ENCODE measurements at regions of chr2 and their contacts with region 1.

Region 1: GRCh38 chr2:10654069-10654468 is 35.7 kb downstream of the NOL10 start:
- DNase-seq: peak; percentile 85
- H3K4me3 Mint-ChIP-seq: no peak overlapping the region
- H3K27ac Mint-ChIP-seq: peak overlapping the region; percentile 80
- H3K4me1 Mint-ChIP-seq: peaks cover 44% of the 10 kb centered on the region
- H3K27me3 Mint-ChIP-seq: no peaks in the 10 kb centered on the region

Region 2: DNA sequence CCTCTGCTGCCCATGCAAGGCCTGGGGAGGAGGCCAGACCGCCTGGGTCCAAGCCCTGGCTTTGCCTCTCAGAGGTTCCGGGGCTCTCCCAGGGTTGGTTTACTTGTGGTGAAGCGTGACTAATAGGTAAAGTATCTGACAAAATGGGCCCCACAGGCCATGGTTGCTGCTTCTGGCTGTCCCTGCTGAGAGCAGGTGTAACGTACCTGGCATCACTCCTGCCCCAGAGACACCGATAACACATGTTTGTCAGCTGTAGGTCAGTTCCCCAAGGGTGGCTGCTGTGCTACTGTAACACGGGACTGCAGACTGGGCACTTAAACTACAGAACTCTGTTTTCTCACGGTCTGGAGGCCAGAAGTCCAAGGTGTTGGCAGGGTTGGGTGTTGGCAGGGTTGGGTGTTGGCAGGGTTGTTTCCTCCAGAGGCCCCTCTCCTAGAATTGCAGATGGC is 240.0 kb before region 1 on chr2:
- CTCF ChIA-PET with region 1: no interaction called
- POLR2A ChIA-PET with region 1: no interaction called
- intact Hi-C with region 1: no loop called
- DNase-seq: peak; percentile 25
- H3K4me3 Mint-ChIP-seq: no peak overlapping the region
- H3K27ac Mint-ChIP-seq: no peak overlapping the region
- H3K4me1 Mint-ChIP-seq: peaks cover 11% of the 10 kb centered on the region
- H3K27me3 Mint-ChIP-seq: no peaks in the 10 kb centered on the region

Region 3: GRCh38 chr2:10477443-10478297 is 176.4 kb before region 1 on chr2:
- CTCF ChIA-PET with region 1: no interaction called
- POLR2A ChIA-PET with region 1: no interaction called
- intact Hi-C with region 1: no loop called
- DNase-seq: no peak
- H3K4me3 Mint-ChIP-seq: no peak overlapping the region
- H3K27ac Mint-ChIP-seq: peak overlapping the region; percentile 5
- H3K4me1 Mint-ChIP-seq: peaks cover 14% of the 10 kb centered on the region
- H3K27me3 Mint-ChIP-seq: peaks cover 1% of the 10 kb centered on the region

Region 4: DNA sequence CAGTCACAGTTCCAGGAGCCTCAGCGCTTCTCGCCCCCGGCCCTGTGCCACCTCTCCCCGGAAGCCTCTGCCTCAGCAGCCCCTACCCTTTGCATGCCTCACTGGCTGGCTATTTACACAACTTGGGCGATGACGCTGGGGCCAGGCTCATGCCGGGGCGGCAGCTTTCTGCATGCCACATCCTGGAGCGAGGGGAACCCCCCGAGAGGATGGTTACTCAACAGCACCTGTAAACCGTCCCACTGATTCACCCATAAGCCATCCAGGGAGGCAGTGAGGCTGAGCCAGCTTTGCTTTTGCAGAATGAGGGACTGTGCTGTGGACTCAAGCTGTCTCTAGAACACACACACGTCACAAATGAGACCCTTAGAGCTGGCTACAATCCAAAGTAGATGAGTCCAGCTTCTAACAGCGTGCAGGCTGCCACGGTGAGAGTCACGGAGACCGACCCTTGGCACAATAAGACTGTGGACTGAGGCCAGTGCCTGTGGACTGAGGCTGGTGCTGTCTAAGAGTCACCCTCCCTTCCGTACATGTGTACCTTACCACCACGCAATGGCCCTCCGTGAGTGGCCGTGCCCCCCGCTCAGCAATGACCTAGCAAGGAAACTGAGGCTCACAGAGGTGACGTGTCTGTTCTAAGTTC is 160.3 kb before region 1 on chr2:
- CTCF ChIA-PET with region 1: no interaction called
- POLR2A ChIA-PET with region 1: interaction called, 3 read pairs
- intact Hi-C with region 1: loop called (anchors 1 kb)
- DNase-seq: peak; percentile 96
- H3K4me3 Mint-ChIP-seq: peak overlapping the region; percentile 21
- H3K27ac Mint-ChIP-seq: peak overlapping the region; percentile 83
- H3K4me1 Mint-ChIP-seq: peaks cover 41% of the 10 kb centered on the region
- H3K27me3 Mint-ChIP-seq: peaks cover 10% of the 10 kb centered on the region

Region 5: DNA sequence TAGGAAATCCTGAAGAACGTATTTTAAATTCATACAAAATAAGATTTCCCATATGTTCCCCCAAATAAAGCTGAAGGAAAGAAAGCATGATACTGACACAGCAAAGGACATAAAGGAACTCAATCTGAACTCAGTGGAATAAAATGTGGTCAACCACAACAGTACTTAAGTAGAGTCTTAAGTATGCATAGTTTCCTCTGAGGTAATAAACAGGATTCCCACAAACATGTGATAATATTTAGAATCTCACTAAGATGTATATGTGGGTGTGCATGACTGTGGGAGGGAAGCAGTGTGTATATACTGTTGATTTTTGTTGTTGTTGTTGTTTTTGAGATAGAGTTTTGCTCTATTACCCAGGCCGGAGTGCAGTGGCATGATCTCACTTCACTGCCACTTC is 33.6 kb before region 1 on chr2:
- CTCF ChIA-PET with region 1: interaction called, 5 read pairs
- POLR2A ChIA-PET with region 1: interaction called, 4 read pairs
- intact Hi-C with region 1: loop called (anchors 1 kb)
- DNase-seq: no peak
- H3K4me3 Mint-ChIP-seq: no peak overlapping the region
- H3K27ac Mint-ChIP-seq: no peak overlapping the region
- H3K4me1 Mint-ChIP-seq: peaks cover 35% of the 10 kb centered on the region
- H3K27me3 Mint-ChIP-seq: no peaks in the 10 kb centered on the region

Region 6: GRCh38 chr2:10638093-10638492 is 16.0 kb before region 1 on chr2:
- CTCF ChIA-PET with region 1: no interaction called
- POLR2A ChIA-PET with region 1: no interaction called
- intact Hi-C with region 1: no loop called
- DNase-seq: no peak
- H3K4me3 Mint-ChIP-seq: no peak overlapping the region
- H3K27ac Mint-ChIP-seq: no peak overlapping the region
- H3K4me1 Mint-ChIP-seq: peaks cover 1% of the 10 kb centered on the region
- H3K27me3 Mint-ChIP-seq: no peaks in the 10 kb centered on the region

Measured in activated CD4-positive, alpha-beta memory T cell treated with anti-CD3 and anti-CD28 coated beads for 36 hours (primary cell).